Caco-2 (cell line): ENCODE measurements at regions of chr1 and their contacts with region 1.

Region 1: GRCh38 chr1:226424228-226425003 is 16.5 kb upstream of the PARP1 start:
- DNase-seq: peak in 1 of 2 experiments; percentile 34
- H3K4me3 ChIP-seq: no peak overlapping the region
- H3K4me3 Mint-ChIP-seq: no peak overlapping the region
- H3K27ac Mint-ChIP-seq: no peak overlapping the region
- H3K4me1 ChIP-seq: no peaks in the 10 kb centered on the region
- H3K4me1 Mint-ChIP-seq: no peaks in the 10 kb centered on the region
- H3K27me3 ChIP-seq: no peaks in the 10 kb centered on the region
- H3K27me3 Mint-ChIP-seq: no peaks in the 10 kb centered on the region
- CTCF ChIP-seq: peak; percentile 69 to 70

Region 2: GRCh38 chr1:226355669-226356551 is 68.5 kb before region 1 on chr1:
- CTCF ChIA-PET with region 1: no interaction called
- POLR2A ChIA-PET with region 1: no interaction called
- intact Hi-C with region 1: no loop called
- DNase-seq: no peak
- H3K4me3 ChIP-seq: no peak overlapping the region
- H3K4me3 Mint-ChIP-seq: no peak overlapping the region
- H3K27ac Mint-ChIP-seq: no peak overlapping the region
- H3K4me1 ChIP-seq: no peaks in the 10 kb centered on the region
- H3K4me1 Mint-ChIP-seq: no peaks in the 10 kb centered on the region
- H3K27me3 ChIP-seq: no peaks in the 10 kb centered on the region
- H3K27me3 Mint-ChIP-seq: no peaks in the 10 kb centered on the region
- CTCF ChIP-seq: no peak

Region 3: GRCh38 chr1:226414098-226414698 is 10.2 kb before region 1 on chr1:
- CTCF ChIA-PET with region 1: no interaction called
- POLR2A ChIA-PET with region 1: no interaction called
- intact Hi-C with region 1: no loop called
- DNase-seq: no peak
- H3K4me3 ChIP-seq: no peak overlapping the region
- H3K4me3 Mint-ChIP-seq: no peak overlapping the region
- H3K27ac Mint-ChIP-seq: no peak overlapping the region
- H3K4me1 ChIP-seq: no peaks in the 10 kb centered on the region
- H3K4me1 Mint-ChIP-seq: no peaks in the 10 kb centered on the region
- H3K27me3 ChIP-seq: no peaks in the 10 kb centered on the region
- H3K27me3 Mint-ChIP-seq: no peaks in the 10 kb centered on the region
- CTCF ChIP-seq: no peak

Region 4: DNA sequence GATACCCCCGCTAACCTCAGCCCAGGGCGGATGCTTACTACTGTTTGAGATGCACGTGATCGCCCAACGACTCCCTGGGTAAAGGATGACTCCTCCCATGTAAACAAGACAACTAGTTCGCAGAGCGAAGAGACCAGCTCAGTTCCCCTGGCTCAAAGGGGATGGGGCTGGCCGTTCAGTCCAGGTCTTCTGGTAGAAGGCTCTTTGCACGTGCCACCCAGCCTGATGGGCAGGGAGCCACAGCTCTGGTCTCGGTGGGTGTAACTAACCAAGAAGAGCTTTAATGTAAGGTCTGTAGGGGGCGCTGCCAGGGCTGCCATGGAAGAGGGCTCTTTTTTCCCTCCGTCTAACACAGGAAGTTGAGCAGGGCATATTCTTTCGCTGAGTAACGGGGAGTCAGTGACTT is 32.9 kb after region 1 on chr1:
- CTCF ChIA-PET with region 1: no interaction called
- POLR2A ChIA-PET with region 1: no interaction called
- intact Hi-C with region 1: no loop called
- DNase-seq: no peak
- H3K4me3 ChIP-seq: no peak overlapping the region
- H3K4me3 Mint-ChIP-seq: no peak overlapping the region
- H3K27ac Mint-ChIP-seq: no peak overlapping the region
- H3K4me1 ChIP-seq: no peaks in the 10 kb centered on the region
- H3K4me1 Mint-ChIP-seq: no peaks in the 10 kb centered on the region
- H3K27me3 ChIP-seq: no peaks in the 10 kb centered on the region
- H3K27me3 Mint-ChIP-seq: no peaks in the 10 kb centered on the region
- CTCF ChIP-seq: no peak

Region 5: GRCh38 chr1:226510453-226510852 is 86.0 kb after region 1 on chr1:
- CTCF ChIA-PET with region 1: interaction called, 12 read pairs
- POLR2A ChIA-PET with region 1: no interaction called
- intact Hi-C with region 1: no loop called
- DNase-seq: no peak
- H3K4me3 ChIP-seq: no peak overlapping the region
- H3K4me3 Mint-ChIP-seq: no peak overlapping the region
- H3K27ac Mint-ChIP-seq: no peak overlapping the region
- H3K4me1 ChIP-seq: peaks cover 15% of the 10 kb centered on the region
- H3K4me1 Mint-ChIP-seq: peaks cover 10% of the 10 kb centered on the region
- H3K27me3 ChIP-seq: no peaks in the 10 kb centered on the region
- H3K27me3 Mint-ChIP-seq: no peaks in the 10 kb centered on the region
- CTCF ChIP-seq: no peak

Region 6: GRCh38 chr1:226569879-226570547 is 145.6 kb after region 1 on chr1:
- CTCF ChIA-PET with region 1: interaction called, 12 read pairs
- POLR2A ChIA-PET with region 1: no interaction called
- intact Hi-C with region 1: no loop called
- DNase-seq: peak; percentile 52 to 72
- H3K4me3 ChIP-seq: no peak overlapping the region
- H3K4me3 Mint-ChIP-seq: no peak overlapping the region
- H3K27ac Mint-ChIP-seq: no peak overlapping the region
- H3K4me1 ChIP-seq: no peaks in the 10 kb centered on the region
- H3K4me1 Mint-ChIP-seq: no peaks in the 10 kb centered on the region
- H3K27me3 ChIP-seq: no peaks in the 10 kb centered on the region
- H3K27me3 Mint-ChIP-seq: no peaks in the 10 kb centered on the region
- CTCF ChIP-seq: peak in 1 of 2 experiments; percentile 66

Region 7: GRCh38 chr1:226634166-226634588 is 209.8 kb after region 1 on chr1:
- CTCF ChIA-PET with region 1: no interaction called
- POLR2A ChIA-PET with region 1: no interaction called
- intact Hi-C with region 1: loop called (anchors 2 kb)
- DNase-seq: peak; percentile 67 to 83
- H3K4me3 ChIP-seq: no peak overlapping the region
- H3K4me3 Mint-ChIP-seq: no peak overlapping the region
- H3K27ac Mint-ChIP-seq: no peak overlapping the region
- H3K4me1 ChIP-seq: no peaks in the 10 kb centered on the region
- H3K4me1 Mint-ChIP-seq: no peaks in the 10 kb centered on the region
- H3K27me3 ChIP-seq: no peaks in the 10 kb centered on the region
- H3K27me3 Mint-ChIP-seq: no peaks in the 10 kb centered on the region
- CTCF ChIP-seq: peak; percentile 92 to 95